CD8-positive, alpha-beta memory T cell (primary cell): ENCODE measurements at regions of chr17 and their contacts with region 1.

Region 1: DNA sequence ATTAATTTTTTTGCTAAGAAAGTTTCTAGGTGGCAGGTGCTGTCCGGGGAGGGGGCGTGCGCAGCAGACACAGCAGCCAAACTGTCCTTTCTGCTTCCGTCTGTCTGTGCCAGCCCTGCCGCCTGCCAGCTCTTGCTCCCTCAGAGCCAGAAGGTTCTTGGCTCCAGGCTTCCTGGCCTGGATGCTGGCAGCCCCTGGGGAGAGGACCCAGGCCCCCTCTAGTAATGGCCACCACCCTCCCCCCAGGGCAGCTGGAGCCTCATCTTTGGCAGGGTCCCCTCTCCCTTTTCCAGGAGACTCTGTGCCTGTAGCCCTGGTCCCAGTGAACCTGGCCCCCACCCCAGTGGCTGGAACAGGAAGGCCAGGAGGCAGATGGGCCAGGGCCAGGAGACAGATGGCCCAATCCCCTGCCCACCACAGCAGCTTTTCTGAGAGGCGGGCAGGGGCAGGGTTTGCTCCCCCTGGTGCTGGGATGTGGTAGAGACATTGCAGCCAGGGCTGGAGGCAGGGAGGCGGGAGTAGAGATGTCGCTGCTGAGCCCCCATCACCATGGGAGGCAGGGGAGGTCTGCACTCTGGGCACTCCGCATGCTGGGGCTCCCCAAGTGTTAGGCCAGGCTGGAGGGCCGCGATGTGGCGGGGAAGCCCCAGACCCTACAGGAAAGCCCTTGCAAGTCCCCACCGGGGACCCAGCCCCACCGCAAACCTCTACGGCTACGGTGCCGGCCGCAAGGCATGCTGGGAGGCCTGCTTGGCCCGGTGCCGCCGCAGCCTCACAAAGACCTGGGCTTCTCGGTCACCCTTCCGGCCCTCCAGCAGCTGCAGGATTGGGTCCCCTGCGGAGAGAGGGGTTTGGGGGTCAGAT is 16.7 kb downstream of the UNC13D start:
- DNase-seq: peak; percentile 58 to 83 (median 72)
- H3K4me3 ChIP-seq: peak overlapping the region; percentile 26
- H3K4me3 Mint-ChIP-seq: peak overlapping the region; percentile 62 to 85 (median 65)
- H3K27ac ChIP-seq: peak overlapping the region; percentile 57
- H3K27ac Mint-ChIP-seq: peak overlapping the region; percentile 61 to 100 (median 94)
- H3K4me1 ChIP-seq: peaks cover 17% of the 10 kb centered on the region
- H3K4me1 Mint-ChIP-seq: peaks cover 15 to 22% (median 19%) of the 10 kb centered on the region in 3 donors
- H3K27me3 ChIP-seq: no peaks in the 10 kb centered on the region
- H3K27me3 Mint-ChIP-seq: no peaks in the 10 kb centered on the region

Region 2: DNA sequence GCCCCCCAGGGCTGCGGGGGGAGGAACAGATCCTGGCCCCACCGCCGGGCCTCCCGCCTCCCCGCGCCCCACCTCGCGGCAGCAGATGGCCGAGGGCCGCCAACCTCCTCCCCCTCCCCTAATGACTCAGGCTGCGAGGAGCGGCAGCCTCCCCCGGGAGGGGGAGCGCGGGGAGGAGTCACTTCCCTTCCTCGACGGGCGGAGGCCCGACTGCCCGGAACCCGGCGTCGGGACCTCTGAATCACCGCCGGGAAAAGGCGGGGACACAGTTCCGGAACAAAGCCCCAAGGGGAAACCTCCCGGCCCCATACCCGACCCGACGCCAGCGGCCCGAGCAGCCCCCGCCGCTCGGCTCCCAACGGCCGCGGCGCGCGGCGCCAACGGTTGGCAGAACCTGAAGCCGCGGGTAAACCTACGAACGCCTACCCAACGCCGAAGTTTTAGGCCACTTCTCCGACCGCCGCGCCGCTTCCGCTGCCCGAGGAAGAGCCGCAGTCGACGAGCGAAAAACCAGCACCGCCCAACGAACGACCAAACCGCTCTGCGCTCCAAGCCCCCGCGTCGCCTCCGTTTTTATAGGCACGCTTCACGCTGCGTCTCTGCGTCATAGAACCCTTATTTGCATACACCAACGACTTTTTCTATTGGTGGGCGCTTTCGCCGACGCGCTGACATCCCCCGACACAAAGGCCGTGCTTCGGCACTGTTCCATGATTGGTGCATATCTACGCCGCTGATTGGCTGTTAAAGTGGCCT is 48.1 kb before region 1 on chr17:
- CTCF ChIA-PET with region 1: interaction called, 7 read pairs
- POLR2A ChIA-PET with region 1: interaction called, 11 read pairs
- DNase-seq: peak; percentile 84 to 98 (median 95)
- H3K4me3 ChIP-seq: peak overlapping the region; percentile 86
- H3K4me3 Mint-ChIP-seq: peak overlapping the region; percentile 93 to 100 (median 98)
- H3K27ac ChIP-seq: peak overlapping the region; percentile 97
- H3K27ac Mint-ChIP-seq: peak overlapping the region; percentile 93 to 100 (median 98)
- H3K4me1 ChIP-seq: peaks cover 40% of the 10 kb centered on the region
- H3K4me1 Mint-ChIP-seq: peaks cover 51 to 69% (median 59%) of the 10 kb centered on the region in 3 donors
- H3K27me3 ChIP-seq: no peaks in the 10 kb centered on the region
- H3K27me3 Mint-ChIP-seq: peaks cover 0 to 16% of the 10 kb centered on the region in 2 donors